ENCODE measurements at regions of chr14 and their contacts with region 1.

Region 1: DNA sequence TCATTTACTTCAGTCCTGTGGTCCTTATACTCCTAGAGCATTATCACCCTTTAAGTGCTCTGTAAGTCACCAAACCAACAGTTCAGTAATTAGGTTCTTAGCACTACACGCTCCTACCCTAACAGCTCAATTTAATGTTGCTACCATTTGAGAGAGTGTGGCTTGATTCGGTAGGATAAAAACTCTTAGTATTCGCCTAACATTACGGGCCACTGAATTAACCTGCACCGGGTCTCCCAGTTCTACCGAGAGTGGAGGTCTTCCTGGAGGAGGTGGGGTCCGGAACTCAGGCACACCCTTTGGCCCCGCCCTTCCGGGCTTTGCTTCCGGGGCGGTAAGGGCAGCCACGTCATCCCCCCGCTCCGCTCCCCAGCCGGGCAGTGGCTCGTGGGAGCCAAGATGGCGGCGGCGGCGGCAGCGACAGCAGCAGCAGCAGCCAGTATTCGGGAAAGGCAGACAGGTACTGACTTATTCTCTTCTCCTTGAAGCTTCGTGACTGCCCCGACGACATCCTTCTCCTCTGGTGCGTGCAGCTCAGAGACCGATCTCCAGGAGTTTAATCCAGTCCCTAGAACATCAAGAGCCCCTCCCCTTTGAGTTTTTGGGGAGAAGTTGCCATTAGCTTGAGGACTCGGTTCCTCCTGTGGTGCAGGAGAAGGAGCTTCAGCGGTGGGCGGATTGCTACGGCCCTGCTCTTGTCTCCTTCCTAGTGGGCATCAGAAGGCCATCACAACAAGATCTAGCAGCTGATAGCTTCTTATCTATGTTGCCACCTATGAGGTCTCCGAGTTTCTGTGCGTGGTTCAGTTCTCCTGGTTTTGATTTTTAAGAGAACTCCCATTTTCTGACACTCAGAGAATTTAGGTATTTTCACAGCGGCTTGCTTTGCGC is at the start of gene SCFD1:
- DNase-seq: peak; percentile 95
- ATAC-seq: peak; percentile 98
- H3K4me3 Mint-ChIP-seq: peak within 1 kb of the TSS; percentile 91
- H3K27ac Mint-ChIP-seq: peak within 1 kb of the TSS; percentile 93
- H3K4me1 Mint-ChIP-seq: peaks cover 25% of the 10 kb centered on the region
- H3K27me3 Mint-ChIP-seq: no peaks in the 10 kb centered on the region
- total RNA-seq, gene SCFD1: 52.3 to 60.9 TPM

Region 2: GRCh38 chr14:30558675-30559555 is 63.3 kb before region 1 on chr14 and contains the start of gene G2E3:
- POLR2A ChIA-PET with region 1: interaction called, 10 read pairs
- DNase-seq: peak; percentile 93
- ATAC-seq: peak; percentile 99
- H3K4me3 Mint-ChIP-seq: peak within 1 kb of the TSS; percentile 100
- H3K27ac Mint-ChIP-seq: peak within 1 kb of the TSS; percentile 100
- H3K4me1 Mint-ChIP-seq: peaks cover 25% of the 10 kb centered on the region
- H3K27me3 Mint-ChIP-seq: peaks cover 3% of the 10 kb centered on the region
- total RNA-seq, gene G2E3: 34.2 to 35.1 TPM

Region 3: DNA sequence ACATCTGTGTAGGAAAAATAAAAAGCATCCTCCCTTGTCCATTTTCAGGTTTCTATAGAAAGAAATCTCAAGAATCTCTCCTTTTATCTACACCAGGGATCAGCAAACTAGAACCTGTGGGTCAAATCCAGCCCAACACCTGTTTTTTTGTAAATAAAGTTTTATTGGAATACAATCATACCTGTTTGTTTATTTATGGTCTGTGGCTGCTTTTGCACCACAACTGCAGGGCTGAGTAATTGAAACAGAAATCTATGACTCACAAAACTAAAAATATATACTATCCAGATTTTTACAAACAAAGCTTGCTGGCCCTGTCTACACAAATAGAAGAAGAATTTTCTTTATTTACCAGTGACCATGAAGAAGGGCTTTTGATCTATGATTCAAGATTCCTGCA is 157.0 kb after region 1 on chr14:
- POLR2A ChIA-PET with region 1: no interaction called
- DNase-seq: no peak
- ATAC-seq: no peak
- H3K4me3 Mint-ChIP-seq: no peak overlapping the region
- H3K27ac Mint-ChIP-seq: no peak overlapping the region
- H3K4me1 Mint-ChIP-seq: no peaks in the 10 kb centered on the region
- H3K27me3 Mint-ChIP-seq: peaks cover 4% of the 10 kb centered on the region